Head of caudate nucleus (tissue), 42 donors: ENCODE measurements at regions of chr6 and their contacts with region 1.

Region 1: GRCh38 chr6:98845211-98846020 is 11.0 kb downstream of the POU3F2 start:
- DNase-seq: peak; percentile 88 to 97 (median 94)

Region 2: GRCh38 chr6:97068211-97068610 is 1777.2 kb before region 1 on chr6:
- intact Hi-C with region 1: loop called (anchors 10 kb)
- DNase-seq: peak in 7 of 42 donors; percentile 18 to 63 (median 40)

Region 3: DNA sequence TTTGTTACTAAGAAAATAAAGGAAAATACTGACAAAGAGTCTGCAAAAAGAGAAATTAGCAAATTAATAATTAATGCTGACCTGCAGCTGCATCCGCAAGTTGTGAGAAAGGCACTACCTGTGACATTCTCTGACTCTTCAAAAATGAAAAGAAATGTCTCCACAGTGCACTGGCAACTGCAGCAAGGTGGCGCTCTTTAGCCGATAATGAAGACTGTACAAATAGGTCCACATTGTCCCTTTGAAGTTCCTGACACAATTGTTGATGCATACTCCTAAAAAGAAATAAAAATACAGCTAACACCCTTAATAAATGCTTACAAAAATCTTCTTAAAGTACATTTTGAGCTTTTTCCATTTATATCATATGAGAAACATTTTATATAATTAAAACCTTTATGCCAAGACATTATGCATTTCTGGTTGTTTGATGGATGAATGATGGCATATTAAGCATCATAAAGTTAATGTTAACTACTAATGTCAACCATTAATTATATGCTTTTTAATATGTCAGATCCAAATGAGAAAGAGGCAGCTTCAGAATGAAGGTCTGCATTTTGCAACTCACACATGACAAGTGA is 1658.9 kb before region 1 on chr6:
- intact Hi-C with region 1: loop called (anchors 10 kb)
- DNase-seq: peak; percentile 44 to 93 (median 80)

Region 4: DNA sequence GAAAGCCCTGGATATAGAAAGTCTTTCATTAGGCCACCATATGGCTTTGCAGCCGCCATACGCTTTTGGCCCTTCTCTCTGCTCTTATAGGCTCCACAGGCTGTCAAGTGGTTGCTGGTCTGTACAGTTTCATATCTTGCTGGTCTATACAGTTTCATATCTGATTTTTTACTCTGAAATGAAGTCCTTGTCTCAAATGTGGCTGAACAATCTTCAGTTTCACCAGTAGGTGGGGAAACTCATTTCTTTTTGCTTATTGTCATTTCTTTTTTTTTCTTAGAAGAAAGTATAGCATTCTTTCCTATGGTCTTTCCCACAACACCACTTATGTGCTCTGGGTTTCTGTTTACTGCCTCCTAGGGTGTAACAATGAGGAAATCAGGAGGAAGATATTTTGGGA is 791.0 kb before region 1 on chr6:
- intact Hi-C with region 1: loop called (anchors 10 kb)
- DNase-seq: no peak

Region 5: DNA sequence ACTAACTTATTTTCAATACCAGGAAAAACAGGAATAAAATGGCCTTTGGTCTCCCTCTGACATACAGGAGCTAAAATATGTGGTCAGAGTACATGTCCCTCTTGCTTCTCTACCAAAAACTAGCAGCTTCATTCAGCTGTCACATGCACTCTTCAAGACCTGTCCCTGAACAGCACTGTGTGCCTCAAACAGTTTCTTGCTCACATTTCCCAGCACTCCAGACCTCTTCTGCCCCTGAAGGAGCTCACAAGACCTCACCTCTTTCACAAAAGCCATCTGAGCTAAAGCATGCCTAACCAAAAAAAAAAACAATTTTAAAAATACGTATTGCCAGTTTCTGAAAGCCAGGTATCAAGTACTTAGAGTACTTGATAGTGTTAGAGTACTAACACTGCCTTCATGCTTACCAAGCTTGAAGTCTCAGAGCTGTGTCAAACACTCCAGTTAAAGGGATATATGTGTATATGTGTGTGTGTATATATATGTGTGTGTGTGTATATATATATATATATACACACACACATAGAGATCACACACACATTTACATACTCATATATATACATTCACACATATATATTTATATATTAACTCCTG is 159.3 kb before region 1 on chr6:
- intact Hi-C with region 1: no loop called
- DNase-seq: no peak